ENCODE measurements at regions of chr14 and their contacts with region 1.

Region 1: DNA sequence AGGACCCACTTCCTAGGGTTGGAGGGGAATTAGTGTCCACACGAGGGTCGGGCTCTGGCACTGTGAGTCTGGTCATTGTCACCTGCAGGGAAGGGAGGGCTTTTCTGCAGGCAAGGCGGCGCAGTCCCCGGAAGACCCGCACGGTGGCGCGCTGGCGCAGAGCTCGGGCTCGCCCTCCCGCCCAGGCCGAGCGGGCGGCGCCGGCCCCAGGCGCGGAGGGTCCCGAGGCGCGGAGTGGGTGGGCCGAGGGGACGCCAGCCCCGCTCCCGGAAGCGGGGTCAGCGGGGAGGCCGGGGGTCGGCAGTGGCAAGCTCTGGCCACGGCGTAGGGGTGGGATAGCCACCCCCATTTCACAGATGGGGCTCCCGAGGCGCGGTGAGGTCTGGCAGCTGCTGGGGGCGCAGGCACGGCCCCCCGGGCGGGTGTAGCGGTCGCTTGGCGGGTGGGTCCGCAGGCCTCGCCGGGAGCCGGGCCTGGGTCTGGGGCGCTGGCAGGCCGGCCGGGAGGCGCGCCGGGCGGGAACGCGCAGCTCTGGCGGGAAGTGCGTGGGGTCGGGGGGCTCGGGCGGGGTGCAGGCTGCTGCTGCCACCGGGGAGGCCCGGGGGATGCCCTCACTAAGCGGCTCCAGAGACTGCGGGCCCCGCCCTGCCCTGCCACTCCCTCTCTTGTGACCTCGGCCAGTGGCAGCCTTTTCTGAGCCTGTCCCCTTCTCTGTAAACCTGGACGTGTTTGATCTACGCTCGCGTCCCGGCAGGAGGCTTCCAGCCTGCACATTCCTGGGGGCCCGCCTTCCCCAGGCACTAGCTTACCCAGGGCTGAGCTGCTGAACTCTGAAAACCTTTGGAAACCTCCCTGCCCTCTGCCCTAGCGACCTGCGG is 46.1 kb downstream of the CYP46A1 start:
- DNase-seq: peak; percentile 84
- H3K4me3 ChIP-seq: peak overlapping the region; percentile 53
- H3K27ac ChIP-seq: no peak overlapping the region
- H3K4me1 ChIP-seq: peaks cover 25% of the 10 kb centered on the region
- H3K27me3 ChIP-seq: no peaks in the 10 kb centered on the region
- CTCF ChIP-seq: peak; percentile 85 to 88 (median 87)
- POLR2A ChIP-seq: no peak

Region 2: GRCh38 chr14:99401621-99402284 is 328.5 kb before region 1 on chr14:
- intact Hi-C with region 1: no loop called
- DNase-seq: no peak
- H3K4me3 ChIP-seq: no peak overlapping the region
- H3K27ac ChIP-seq: no peak overlapping the region
- H3K4me1 ChIP-seq: no peaks in the 10 kb centered on the region
- H3K27me3 ChIP-seq: no peaks in the 10 kb centered on the region
- CTCF ChIP-seq: no peak
- POLR2A ChIP-seq: no peak

Region 3: GRCh38 chr14:99793213-99794150 is 63.3 kb after region 1 on chr14 and contains the start of gene EML1:
- intact Hi-C with region 1: loop called (anchors 10 kb)
- DNase-seq: peak; percentile 88
- H3K4me3 ChIP-seq: peak within 1 kb of the TSS; percentile 56
- H3K27ac ChIP-seq: peak within 1 kb of the TSS; percentile 53 to 91
- H3K4me1 ChIP-seq: peaks cover 5% of the 10 kb centered on the region
- H3K27me3 ChIP-seq: no peaks in the 10 kb centered on the region
- CTCF ChIP-seq: peak in 1 of 3 experiments; percentile 24
- POLR2A ChIP-seq: no peak
- total RNA-seq, gene EML1: 22.0 to 22.7 TPM

Region 4: GRCh38 chr14:99884834-99885648 is 154.8 kb after region 1 on chr14:
- intact Hi-C with region 1: loop called (anchors 5 kb)
- DNase-seq: peak; percentile 46
- H3K4me3 ChIP-seq: no peak overlapping the region
- H3K27ac ChIP-seq: no peak overlapping the region
- H3K4me1 ChIP-seq: no peaks in the 10 kb centered on the region
- H3K27me3 ChIP-seq: no peaks in the 10 kb centered on the region
- CTCF ChIP-seq: peak; percentile 59 to 69 (median 68)
- POLR2A ChIP-seq: no peak

Measured in testis (tissue), 5 donors.